ENCODE measurements at regions of chrX and their contacts with region 1.

Region 1: GRCh38 chrX:3743801-3744439 is 30.5 kb upstream of the PRKX start:
- DNase-seq: peak in 1 of 2 donors; percentile 76
- ATAC-seq: peak; percentile 73 to 94 (median 93)
- H3K4me3 ChIP-seq: no peak overlapping the region
- H3K4me3 Mint-ChIP-seq: peak overlapping the region; percentile 78
- H3K27ac ChIP-seq: peak overlapping the region; percentile 50
- H3K27ac Mint-ChIP-seq: peak overlapping the region; percentile 68 to 82
- H3K4me1 ChIP-seq: peaks cover 31% of the 10 kb centered on the region
- H3K4me1 Mint-ChIP-seq: peaks cover 26 to 43% of the 10 kb centered on the region in 2 donors
- H3K27me3 ChIP-seq: no peaks in the 10 kb centered on the region
- H3K27me3 Mint-ChIP-seq: no peaks in the 10 kb centered on the region
- CTCF ChIP-seq: no peak

Region 2: DNA sequence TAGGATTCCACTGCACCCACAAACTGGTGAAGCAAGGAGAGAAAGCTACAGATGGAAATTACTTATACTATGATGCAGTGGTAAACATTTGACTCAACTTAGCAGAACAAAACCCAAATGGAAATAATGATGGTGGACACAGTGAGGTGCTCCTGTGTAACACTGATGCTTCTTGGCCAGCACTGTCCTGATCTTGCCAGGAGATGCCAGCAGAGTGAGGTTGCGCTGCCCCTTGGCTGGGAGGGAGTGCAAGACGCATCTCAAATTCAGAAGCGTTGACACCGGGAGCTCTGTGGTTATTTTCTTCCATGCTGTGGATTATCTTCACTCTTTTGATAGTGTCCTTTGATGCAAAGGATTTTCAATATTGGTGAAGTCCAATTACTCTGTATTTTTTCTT is 759.6 kb before region 1 on chrX:
- intact Hi-C with region 1: no loop called
- DNase-seq: no peak
- ATAC-seq: no peak
- H3K4me3 ChIP-seq: no peak overlapping the region
- H3K4me3 Mint-ChIP-seq: no peak overlapping the region
- H3K27ac ChIP-seq: no peak overlapping the region
- H3K27ac Mint-ChIP-seq: no peak overlapping the region
- H3K4me1 ChIP-seq: no peaks in the 10 kb centered on the region
- H3K4me1 Mint-ChIP-seq: no peaks in the 10 kb centered on the region
- H3K27me3 ChIP-seq: no peaks in the 10 kb centered on the region
- H3K27me3 Mint-ChIP-seq: peaks cover 6 to 8% of the 10 kb centered on the region in 2 donors
- CTCF ChIP-seq: no peak

Region 3: GRCh38 chrX:3706481-3706880 is 37.4 kb before region 1 on chrX:
- intact Hi-C with region 1: loop called (anchors 5 kb)
- DNase-seq: no peak
- ATAC-seq: no peak
- H3K4me3 ChIP-seq: no peak overlapping the region
- H3K4me3 Mint-ChIP-seq: peak overlapping the region; percentile 66
- H3K27ac ChIP-seq: peak overlapping the region; percentile 64
- H3K27ac Mint-ChIP-seq: peak overlapping the region; percentile 87 to 96
- H3K4me1 ChIP-seq: peaks cover 64% of the 10 kb centered on the region
- H3K4me1 Mint-ChIP-seq: peaks cover 16 to 65% of the 10 kb centered on the region in 2 donors
- H3K27me3 ChIP-seq: no peaks in the 10 kb centered on the region
- H3K27me3 Mint-ChIP-seq: no peaks in the 10 kb centered on the region
- CTCF ChIP-seq: no peak